GM12878 (cell line): ENCODE measurements at regions of chr10 and their contacts with region 1.

Region 1: GRCh38 chr10:88288320-88289059 is 294.6 kb downstream of the RNLS start:
- DNase-seq: peak; percentile 67
- ATAC-seq: peak; percentile 91
- H3K4me3 ChIP-seq: no peak overlapping the region
- H3K27ac ChIP-seq: peak overlapping the region; percentile 13; the same call in 1 of the 2 replicates
- H3K4me1 ChIP-seq: peaks cover 15% of the 10 kb centered on the region
- H3K27me3 ChIP-seq: no peaks in the 10 kb centered on the region
- CTCF ChIP-seq: no peak
- EP300 ChIP-seq: peak; percentile 57 to 66; a peak in 2 of 4 replicates
- POLR2A ChIP-seq: no peak
- RAD21 ChIP-seq: 0 out of 2 replicates have a peak, but pooled peaks have one; percentile 25

Region 2: DNA sequence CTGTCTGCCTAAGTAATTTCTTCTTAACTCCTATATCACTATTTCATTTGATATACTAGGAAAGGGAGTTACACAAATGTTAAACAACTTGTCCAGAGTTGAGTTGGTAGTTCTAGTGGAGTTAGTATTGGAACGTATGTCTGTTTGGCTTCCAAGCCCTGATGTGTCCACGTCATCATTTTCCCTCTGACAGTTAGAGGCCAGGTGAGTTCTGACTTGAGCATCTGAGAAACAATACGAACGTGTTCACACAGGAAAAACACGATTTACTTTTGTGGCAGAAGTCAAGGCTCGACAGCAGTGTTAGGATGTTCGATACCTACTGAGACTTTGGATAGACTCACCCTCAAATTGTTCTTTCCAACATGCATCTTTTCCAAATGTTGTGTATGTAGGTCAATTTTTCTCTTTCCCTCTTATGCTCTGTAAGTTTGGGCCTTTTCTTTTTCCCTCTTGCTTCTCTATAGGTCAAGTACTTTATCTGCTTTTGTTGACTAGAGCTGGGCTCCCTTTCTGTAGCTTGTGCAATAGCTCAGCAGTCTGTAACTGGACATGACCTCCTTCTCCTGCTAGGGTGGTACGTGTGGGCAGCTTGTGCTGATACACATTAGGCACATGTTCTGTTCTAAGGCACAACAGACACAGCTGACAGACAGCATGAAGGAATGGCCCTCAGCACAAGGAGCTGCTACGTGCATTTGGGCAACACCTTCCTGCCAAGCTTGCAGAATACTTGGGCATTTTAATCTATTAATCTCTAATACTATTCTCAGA is 202.1 kb before region 1 on chr10:
- CTCF ChIA-PET with region 1: no interaction called
- POLR2A ChIA-PET with region 1: no interaction called
- RAD21 ChIA-PET with region 1: no interaction called
- SMC1A ChIA-PET with region 1: no interaction called
- in situ Hi-C with region 1: no loop called
- intact Hi-C with region 1: no loop called
- DNase-seq: no peak
- ATAC-seq: no peak
- H3K4me3 ChIP-seq: no peak overlapping the region
- H3K27ac ChIP-seq: no peak overlapping the region
- H3K4me1 ChIP-seq: peaks cover 37% of the 10 kb centered on the region
- H3K27me3 ChIP-seq: no peaks in the 10 kb centered on the region
- CTCF ChIP-seq: no peak
- EP300 ChIP-seq: no peak
- POLR2A ChIP-seq: no peak
- RAD21 ChIP-seq: no peak

Region 3: DNA sequence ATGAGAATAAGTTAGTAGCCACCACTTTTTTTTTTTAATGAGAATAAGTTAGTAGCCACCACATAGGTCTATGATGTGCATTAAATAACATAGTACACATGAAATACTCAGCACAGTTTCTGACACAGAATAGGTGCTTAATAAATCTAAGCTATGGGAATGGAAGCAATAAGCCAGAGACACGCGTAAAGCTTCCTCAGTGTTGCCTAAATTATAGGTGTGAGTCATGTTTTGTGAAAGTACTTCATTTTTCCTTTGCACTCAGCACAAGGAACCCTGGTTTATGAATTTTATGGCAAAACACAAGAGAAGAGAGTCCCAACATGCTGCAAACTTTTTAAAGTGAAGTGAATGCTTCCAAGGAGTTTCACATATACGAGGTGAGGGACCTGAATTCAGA is 27.3 kb after region 1 on chr10:
- CTCF ChIA-PET with region 1: interaction called, 4 read pairs
- POLR2A ChIA-PET with region 1: interaction called, 4 read pairs
- RAD21 ChIA-PET with region 1: interaction called, 3 read pairs
- SMC1A ChIA-PET with region 1: interaction called, 48 read pairs
- in situ Hi-C with region 1: no loop called
- intact Hi-C with region 1: no loop called
- DNase-seq: no peak
- ATAC-seq: no peak
- H3K4me3 ChIP-seq: no peak overlapping the region
- H3K27ac ChIP-seq: no peak overlapping the region
- H3K4me1 ChIP-seq: no peaks in the 10 kb centered on the region
- H3K27me3 ChIP-seq: no peaks in the 10 kb centered on the region
- CTCF ChIP-seq: no peak
- EP300 ChIP-seq: no peak
- POLR2A ChIP-seq: no peak
- RAD21 ChIP-seq: no peak

Region 4: GRCh38 chr10:88392222-88392621 is 103.7 kb after region 1 on chr10:
- CTCF ChIA-PET with region 1: interaction called, 40 read pairs
- POLR2A ChIA-PET with region 1: interaction called, 17 read pairs
- RAD21 ChIA-PET with region 1: interaction called, 89 read pairs
- SMC1A ChIA-PET with region 1: interaction called, 83 read pairs
- in situ Hi-C with region 1: no loop called
- intact Hi-C with region 1: loop called (anchors 5 kb)
- DNase-seq: peak; percentile 80
- ATAC-seq: peak; percentile 95
- H3K4me3 ChIP-seq: peak overlapping the region; percentile 28; the same call in 1 of the 2 replicates
- H3K27ac ChIP-seq: peak overlapping the region; percentile 82
- H3K4me1 ChIP-seq: peaks cover 46% of the 10 kb centered on the region
- H3K27me3 ChIP-seq: no peaks in the 10 kb centered on the region
- CTCF ChIP-seq: no peak
- EP300 ChIP-seq: no peak
- POLR2A ChIP-seq: 0 out of 2 replicates have a peak, but pooled peaks have one; percentile 30
- RAD21 ChIP-seq: peak; percentile 26

Region 5: DNA sequence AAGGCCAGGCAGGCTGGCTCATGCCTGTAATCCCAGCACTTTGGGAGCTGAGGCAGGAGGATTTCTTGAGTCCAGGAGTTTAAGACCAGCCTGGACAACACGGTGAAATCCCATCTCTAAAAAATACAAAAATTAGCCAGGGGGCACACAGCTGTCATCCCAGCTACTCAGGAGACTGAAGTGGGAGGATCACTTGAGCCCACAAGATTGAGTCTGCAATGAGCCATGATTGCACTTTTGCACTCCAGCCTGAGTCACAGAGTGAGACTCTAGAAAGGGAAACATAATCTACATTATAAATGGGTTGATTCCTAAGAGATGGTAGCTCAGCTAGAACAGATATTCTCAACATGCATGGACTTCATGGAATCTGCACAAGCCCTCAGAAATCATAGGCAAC is 369.4 kb after region 1 on chr10:
- CTCF ChIA-PET with region 1: no interaction called
- POLR2A ChIA-PET with region 1: no interaction called
- RAD21 ChIA-PET with region 1: no interaction called
- SMC1A ChIA-PET with region 1: no interaction called
- in situ Hi-C with region 1: no loop called
- intact Hi-C with region 1: no loop called
- DNase-seq: no peak
- ATAC-seq: no peak
- H3K4me3 ChIP-seq: no peak overlapping the region
- H3K27ac ChIP-seq: no peak overlapping the region
- H3K4me1 ChIP-seq: no peaks in the 10 kb centered on the region
- H3K27me3 ChIP-seq: no peaks in the 10 kb centered on the region
- CTCF ChIP-seq: no peak
- EP300 ChIP-seq: no peak
- POLR2A ChIP-seq: no peak
- RAD21 ChIP-seq: no peak